ENCODE measurements at regions of chr2 and their contacts with region 1.

Region 1: GRCh38 chr2:144516981-144517865 is 2.7 kb downstream of the ZEB2 start:
- DNase-seq: peak; percentile 83
- H3K4me3 ChIP-seq: peak overlapping the region; percentile 89 to 94 (median 90)
- H3K27ac ChIP-seq: peak overlapping the region; percentile 97
- H3K4me1 ChIP-seq: peaks cover 57% of the 10 kb centered on the region
- H3K27me3 ChIP-seq: no peaks in the 10 kb centered on the region
- CTCF ChIP-seq: no peak
- POLR2A ChIP-seq: peak; percentile 60

Region 2: DNA sequence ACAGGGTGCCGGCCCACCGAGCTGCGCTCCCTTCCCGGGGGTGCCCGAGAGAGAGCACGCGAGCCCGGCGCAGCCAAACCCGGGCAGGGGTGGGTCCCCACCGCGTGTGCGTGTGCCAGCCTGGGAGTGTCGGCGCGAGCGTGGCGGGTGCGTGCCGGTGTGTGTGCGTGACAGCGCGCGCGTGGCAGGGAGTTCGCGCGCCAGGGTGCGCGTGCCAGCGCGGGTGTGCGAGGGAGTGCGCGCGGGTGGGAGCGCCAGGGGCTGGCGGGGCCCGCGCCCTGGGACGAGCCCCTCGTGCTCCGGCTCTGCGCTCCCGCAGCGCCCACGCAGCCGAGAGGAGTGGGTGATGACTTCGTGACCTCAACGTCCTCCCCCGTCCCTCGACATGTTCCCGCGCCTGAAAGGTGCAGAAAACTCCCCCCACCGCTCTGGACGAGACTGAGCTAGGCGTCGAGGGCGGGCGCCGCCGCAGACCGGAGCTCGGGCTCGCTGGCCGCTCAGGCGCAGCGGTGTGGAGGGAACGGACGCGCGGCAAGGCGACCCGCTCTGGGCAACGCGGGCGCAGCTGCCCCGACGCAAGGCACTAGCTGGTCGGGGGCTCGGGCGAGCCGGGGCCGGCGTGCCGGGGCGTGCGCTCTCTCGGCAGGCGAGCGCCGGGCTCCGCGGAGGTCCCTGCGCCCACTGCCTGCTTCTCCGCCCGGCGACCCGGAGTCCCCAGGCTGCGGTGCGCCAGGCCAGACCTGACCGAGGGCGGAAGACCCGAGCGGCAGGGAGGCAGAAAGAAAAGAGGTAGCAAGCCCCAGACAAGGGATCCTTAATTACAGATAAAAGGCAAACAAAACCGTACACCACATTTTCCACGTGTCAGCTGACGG is 580.1 kb before region 1 on chr2:
- CTCF ChIA-PET with region 1: no interaction called
- POLR2A ChIA-PET with region 1: no interaction called
- dilution Hi-C with region 1: no loop called
- intact Hi-C with region 1: loop called (anchors 10 kb)
- DNase-seq: peak; percentile 48
- H3K4me3 ChIP-seq: peak overlapping the region; percentile 41 to 63 (median 47)
- H3K27ac ChIP-seq: no peak overlapping the region
- H3K4me1 ChIP-seq: peaks cover 10% of the 10 kb centered on the region
- H3K27me3 ChIP-seq: no peaks in the 10 kb centered on the region
- CTCF ChIP-seq: no peak
- POLR2A ChIP-seq: no peak

Region 3: GRCh38 chr2:144350151-144350802 is 166.9 kb before region 1 on chr2:
- CTCF ChIA-PET with region 1: no interaction called
- POLR2A ChIA-PET with region 1: no interaction called
- dilution Hi-C with region 1: loop called (anchors 25 kb)
- intact Hi-C with region 1: loop called (anchors 1 kb)
- DNase-seq: peak; percentile 99
- H3K4me3 ChIP-seq: peak overlapping the region in 2 of 3 experiments; percentile 0 to 9
- H3K27ac ChIP-seq: peak overlapping the region; percentile 79
- H3K4me1 ChIP-seq: peaks cover 32% of the 10 kb centered on the region
- H3K27me3 ChIP-seq: no peaks in the 10 kb centered on the region
- CTCF ChIP-seq: no peak
- POLR2A ChIP-seq: no peak

Region 4: GRCh38 chr2:144456680-144457079 is 60.5 kb before region 1 on chr2:
- CTCF ChIA-PET with region 1: no interaction called
- POLR2A ChIA-PET with region 1: no interaction called
- dilution Hi-C with region 1: no loop called
- intact Hi-C with region 1: loop called (anchors 1 kb)
- DNase-seq: peak; percentile 64
- H3K4me3 ChIP-seq: no peak overlapping the region
- H3K27ac ChIP-seq: no peak overlapping the region
- H3K4me1 ChIP-seq: peaks cover 69% of the 10 kb centered on the region
- H3K27me3 ChIP-seq: no peaks in the 10 kb centered on the region
- CTCF ChIP-seq: no peak
- POLR2A ChIP-seq: no peak

Region 5: GRCh38 chr2:145007093-145007959 is 490.1 kb after region 1 on chr2:
- CTCF ChIA-PET with region 1: interaction called, 4 read pairs
- POLR2A ChIA-PET with region 1: no interaction called
- dilution Hi-C with region 1: no loop called
- intact Hi-C with region 1: loop called (anchors 5 kb)
- DNase-seq: peak; percentile 91
- H3K4me3 ChIP-seq: peak overlapping the region in 1 of 3 experiments; percentile 3
- H3K27ac ChIP-seq: peak overlapping the region; percentile 80
- H3K4me1 ChIP-seq: peaks cover 38% of the 10 kb centered on the region
- H3K27me3 ChIP-seq: no peaks in the 10 kb centered on the region
- CTCF ChIP-seq: no peak
- POLR2A ChIP-seq: no peak

Region 6: GRCh38 chr2:145752091-145752806 is 1235.0 kb after region 1 on chr2:
- CTCF ChIA-PET with region 1: interaction called, 9 read pairs
- POLR2A ChIA-PET with region 1: no interaction called
- dilution Hi-C with region 1: no loop called
- intact Hi-C with region 1: loop called (anchors 1 kb)
- DNase-seq: peak; percentile 85
- H3K4me3 ChIP-seq: no peak overlapping the region
- H3K27ac ChIP-seq: peak overlapping the region; percentile 41
- H3K4me1 ChIP-seq: peaks cover 25% of the 10 kb centered on the region
- H3K27me3 ChIP-seq: no peaks in the 10 kb centered on the region
- CTCF ChIP-seq: peak; percentile 64 to 66
- POLR2A ChIP-seq: no peak

Measured in endothelial cell of umbilical vein (primary cell).